Transverse colon (tissue), 4 donors: ENCODE measurements at regions of chr13 and their contacts with region 1.

Region 1: GRCh38 chr13:21465710-21466160 is 6.6 kb upstream of the ZDHHC20 start:
- DNase-seq: peak; percentile 17
- H3K4me3 ChIP-seq: no peak overlapping the region
- H3K27ac ChIP-seq: peak overlapping the region in 2 of 4 donors; percentile 27 to 41
- H3K4me1 ChIP-seq: peaks cover 0 to 11% (median 0%) of the 10 kb centered on the region in 4 donors
- H3K27me3 ChIP-seq: no peaks in the 10 kb centered on the region
- CTCF ChIP-seq: no peak
- EP300 ChIP-seq: no peak
- POLR2A ChIP-seq: no peak

Region 2: DNA sequence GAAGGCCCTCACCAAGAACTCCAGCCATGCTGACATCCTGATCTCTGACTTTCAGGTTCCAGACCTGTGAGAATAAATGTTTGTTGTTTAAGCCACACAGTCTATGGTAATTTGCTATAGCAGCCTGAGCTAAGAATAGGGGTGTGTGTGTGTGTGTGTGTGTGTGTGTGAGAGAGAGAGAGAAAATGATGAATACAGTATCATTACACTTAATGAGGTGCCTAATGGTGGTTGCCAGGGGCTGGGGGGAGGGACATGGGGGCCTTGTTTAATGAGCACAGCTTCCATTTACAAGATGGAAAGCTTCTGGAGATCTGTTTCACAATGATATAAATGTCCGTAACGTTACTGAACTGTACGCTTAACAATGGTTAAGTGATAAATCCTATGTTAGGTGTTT is 350.5 kb before region 1 on chr13:
- in situ Hi-C with region 1: loop called in 1 of 4 experiments (anchors 10 kb)
- intact Hi-C with region 1: no loop called
- DNase-seq: no peak
- H3K4me3 ChIP-seq: no peak overlapping the region
- H3K27ac ChIP-seq: no peak overlapping the region
- H3K4me1 ChIP-seq: no peaks in the 10 kb centered on the region
- H3K27me3 ChIP-seq: no peaks in the 10 kb centered on the region
- CTCF ChIP-seq: no peak
- EP300 ChIP-seq: no peak
- POLR2A ChIP-seq: no peak

Region 3: DNA sequence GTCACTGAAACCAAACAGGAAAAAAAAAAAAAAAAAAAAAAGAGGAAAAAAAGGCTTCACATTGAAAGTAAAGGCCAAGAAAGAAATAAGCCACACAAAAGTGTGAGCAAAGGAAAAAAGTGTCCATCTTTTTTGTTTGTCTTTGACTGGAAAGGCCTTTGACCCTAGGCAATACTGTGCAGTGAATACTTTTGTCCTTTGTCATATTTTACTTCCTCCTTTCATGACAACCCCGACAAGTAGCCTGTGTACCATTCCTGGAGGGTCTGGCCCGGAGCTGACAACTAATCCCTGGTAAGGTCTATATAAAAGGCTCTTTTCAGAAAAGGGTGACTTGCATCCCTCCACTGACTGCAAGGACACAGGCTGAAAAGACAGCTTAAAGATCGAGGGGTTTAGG is 151.1 kb after region 1 on chr13:
- in situ Hi-C with region 1: no loop called
- intact Hi-C with region 1: no loop called
- DNase-seq: peak; percentile 30
- H3K4me3 ChIP-seq: peak overlapping the region in 2 of 4 donors; percentile 7 to 23
- H3K27ac ChIP-seq: peak overlapping the region in 1 of 4 donors; percentile 44
- H3K4me1 ChIP-seq: peaks cover 0 to 9% (median 4%) of the 10 kb centered on the region in 4 donors
- H3K27me3 ChIP-seq: no peaks in the 10 kb centered on the region
- CTCF ChIP-seq: no peak
- EP300 ChIP-seq: no peak
- POLR2A ChIP-seq: no peak

Region 4: GRCh38 chr13:21998279-21998990 is 532.7 kb after region 1 on chr13:
- in situ Hi-C with region 1: no loop called
- intact Hi-C with region 1: no loop called
- DNase-seq: no peak
- H3K4me3 ChIP-seq: no peak overlapping the region
- H3K27ac ChIP-seq: no peak overlapping the region
- H3K4me1 ChIP-seq: peaks cover 0 to 7% (median 5%) of the 10 kb centered on the region in 4 donors
- H3K27me3 ChIP-seq: no peaks in the 10 kb centered on the region
- CTCF ChIP-seq: no peak
- EP300 ChIP-seq: no peak
- POLR2A ChIP-seq: no peak